Heart right ventricle (tissue), 16 donors: ENCODE measurements at regions of chr2 and their contacts with region 1.

Region 1: DNA sequence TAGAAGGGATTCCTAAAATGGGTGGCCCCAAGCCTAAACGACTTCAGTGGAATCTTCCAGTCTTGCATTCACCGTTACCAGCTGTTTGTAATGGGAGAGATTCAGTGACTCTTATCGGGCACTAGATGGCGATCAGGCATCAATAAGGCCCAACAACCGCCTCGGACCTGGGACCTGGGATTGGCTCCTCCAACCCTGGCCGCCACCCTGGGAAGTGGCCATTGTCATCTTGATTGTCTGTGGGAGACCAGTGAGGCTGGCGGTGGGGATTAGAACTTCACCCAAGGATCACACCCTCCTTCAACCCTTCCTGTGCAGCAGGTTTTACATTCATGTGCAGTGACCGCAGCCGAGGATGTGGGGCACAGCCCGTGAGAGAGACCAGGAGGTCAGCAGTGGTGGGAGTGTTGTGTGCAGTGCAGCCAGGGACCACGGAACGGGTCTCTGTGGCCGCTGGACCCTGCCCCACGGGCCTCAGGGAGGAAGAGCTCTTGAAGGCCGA is 85.3 kb downstream of the SPP2 start:
- DNase-seq: peak; percentile 25 to 29
- ATAC-seq: peak; percentile 42 to 81 (median 66)
- H3K4me3 ChIP-seq: no peak overlapping the region
- H3K27ac ChIP-seq: no peak overlapping the region
- H3K4me1 ChIP-seq: peaks cover 0 to 18% (median 0%) of the 10 kb centered on the region in 9 donors
- H3K27me3 ChIP-seq: peaks cover 0 to 38% (median 24%) of the 10 kb centered on the region in 7 donors
- CTCF ChIP-seq: peak; percentile 54 to 86 (median 80)

Region 2: DNA sequence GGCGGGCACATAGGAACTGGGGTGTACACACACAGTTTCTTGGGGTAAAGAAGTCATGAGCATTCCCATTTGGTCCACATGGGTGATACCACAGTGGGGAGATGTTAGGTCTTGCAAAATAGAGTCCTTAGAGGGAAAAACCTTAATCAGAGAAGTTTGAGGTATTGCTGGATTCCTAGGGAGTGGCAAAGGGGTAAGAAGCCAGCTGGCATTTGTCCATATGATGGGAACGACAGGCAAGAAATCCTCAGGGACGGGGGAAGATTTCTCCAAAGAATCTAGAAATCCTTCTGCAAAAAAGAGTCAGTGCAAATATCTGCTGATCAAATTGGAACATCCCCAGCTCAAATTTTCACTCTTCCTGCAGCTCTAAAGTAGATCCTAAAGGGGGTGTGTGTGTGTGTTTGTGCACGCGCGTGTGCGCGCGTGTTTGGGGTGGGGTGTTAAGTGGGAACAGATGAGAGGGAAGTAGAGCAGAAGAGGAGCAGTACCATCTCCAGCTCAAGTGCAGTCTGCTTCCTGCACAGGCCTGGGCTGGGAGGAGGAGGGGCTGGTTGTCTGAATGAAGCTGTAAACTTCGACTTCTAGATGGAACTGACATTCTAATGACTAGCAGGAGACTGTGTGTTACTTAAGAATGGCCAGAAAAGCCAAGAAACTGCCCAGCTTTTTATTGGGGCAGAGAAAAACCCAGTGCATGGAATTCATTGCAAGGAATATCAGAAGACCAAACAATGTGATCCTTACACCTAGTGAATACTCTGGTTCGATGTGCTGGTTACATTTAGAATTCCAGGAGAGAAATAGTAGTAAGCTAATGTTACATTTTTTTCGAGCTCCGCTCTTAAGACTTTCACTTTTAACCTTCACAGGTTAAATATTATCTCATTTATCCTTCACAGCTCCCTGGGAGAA is 82.8 kb after region 1 on chr2:
- intact Hi-C with region 1: no loop called
- DNase-seq: no peak
- ATAC-seq: no peak
- H3K4me3 ChIP-seq: no peak overlapping the region
- H3K27ac ChIP-seq: no peak overlapping the region
- H3K4me1 ChIP-seq: no peaks in the 10 kb centered on the region
- H3K27me3 ChIP-seq: peaks cover 0 to 18% (median 13%) of the 10 kb centered on the region in 7 donors
- CTCF ChIP-seq: no peak

Region 3: GRCh38 chr2:234288974-234289455 is 153.2 kb after region 1 on chr2:
- intact Hi-C with region 1: loop called in 3 of 10 experiments (anchors 5 to 10 kb)
- DNase-seq: peak; percentile 49 to 71
- ATAC-seq: peak in 5 of 8 donors; percentile 32 to 64 (median 43)
- H3K4me3 ChIP-seq: no peak overlapping the region
- H3K27ac ChIP-seq: peak overlapping the region in 1 of 10 donors; percentile 90
- H3K4me1 ChIP-seq: peaks cover 0 to 64% (median 13%) of the 10 kb centered on the region in 9 donors
- H3K27me3 ChIP-seq: peaks cover 0 to 3% (median 0%) of the 10 kb centered on the region in 7 donors
- CTCF ChIP-seq: peak; percentile 48 to 86 (median 72)

Region 4: DNA sequence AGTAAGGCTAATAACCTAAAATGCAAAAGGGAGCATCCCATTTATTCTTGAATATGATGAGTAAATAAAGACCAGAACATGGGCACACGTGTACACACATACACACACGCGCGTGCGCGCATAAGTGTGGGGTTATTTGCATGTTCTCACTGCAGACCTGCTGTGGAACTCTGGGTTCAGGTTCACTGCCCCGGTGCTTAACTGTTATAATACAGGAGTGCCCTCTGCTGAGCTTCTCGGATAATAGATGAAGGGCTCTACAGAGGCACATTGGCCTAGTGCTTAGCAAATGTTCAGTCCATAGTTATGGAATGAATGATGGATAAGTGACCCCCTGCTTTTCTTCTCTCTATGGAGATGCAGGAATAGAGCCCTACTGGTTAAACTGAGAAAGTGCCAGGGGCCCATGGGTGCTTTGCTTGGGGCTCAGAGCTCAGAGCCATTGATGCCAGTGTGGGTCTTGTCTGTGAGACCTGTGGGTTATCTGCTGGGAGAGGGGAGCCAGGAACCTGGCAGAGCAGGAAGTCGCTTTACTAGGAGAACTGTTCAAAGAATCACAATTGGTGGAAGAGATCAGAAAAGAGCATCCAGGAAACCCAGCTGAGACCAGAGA is 364.7 kb after region 1 on chr2:
- intact Hi-C with region 1: loop called (anchors 1 to 5 kb)
- DNase-seq: peak; percentile 27 to 48
- ATAC-seq: peak in 6 of 8 donors; percentile 23 to 69 (median 54)
- H3K4me3 ChIP-seq: no peak overlapping the region
- H3K27ac ChIP-seq: no peak overlapping the region
- H3K4me1 ChIP-seq: peaks cover 2 to 21% (median 9%) of the 10 kb centered on the region in 9 donors
- H3K27me3 ChIP-seq: peaks cover 0 to 19% (median 5%) of the 10 kb centered on the region in 7 donors
- CTCF ChIP-seq: peak; percentile 31 to 78 (median 64)

Region 5: DNA sequence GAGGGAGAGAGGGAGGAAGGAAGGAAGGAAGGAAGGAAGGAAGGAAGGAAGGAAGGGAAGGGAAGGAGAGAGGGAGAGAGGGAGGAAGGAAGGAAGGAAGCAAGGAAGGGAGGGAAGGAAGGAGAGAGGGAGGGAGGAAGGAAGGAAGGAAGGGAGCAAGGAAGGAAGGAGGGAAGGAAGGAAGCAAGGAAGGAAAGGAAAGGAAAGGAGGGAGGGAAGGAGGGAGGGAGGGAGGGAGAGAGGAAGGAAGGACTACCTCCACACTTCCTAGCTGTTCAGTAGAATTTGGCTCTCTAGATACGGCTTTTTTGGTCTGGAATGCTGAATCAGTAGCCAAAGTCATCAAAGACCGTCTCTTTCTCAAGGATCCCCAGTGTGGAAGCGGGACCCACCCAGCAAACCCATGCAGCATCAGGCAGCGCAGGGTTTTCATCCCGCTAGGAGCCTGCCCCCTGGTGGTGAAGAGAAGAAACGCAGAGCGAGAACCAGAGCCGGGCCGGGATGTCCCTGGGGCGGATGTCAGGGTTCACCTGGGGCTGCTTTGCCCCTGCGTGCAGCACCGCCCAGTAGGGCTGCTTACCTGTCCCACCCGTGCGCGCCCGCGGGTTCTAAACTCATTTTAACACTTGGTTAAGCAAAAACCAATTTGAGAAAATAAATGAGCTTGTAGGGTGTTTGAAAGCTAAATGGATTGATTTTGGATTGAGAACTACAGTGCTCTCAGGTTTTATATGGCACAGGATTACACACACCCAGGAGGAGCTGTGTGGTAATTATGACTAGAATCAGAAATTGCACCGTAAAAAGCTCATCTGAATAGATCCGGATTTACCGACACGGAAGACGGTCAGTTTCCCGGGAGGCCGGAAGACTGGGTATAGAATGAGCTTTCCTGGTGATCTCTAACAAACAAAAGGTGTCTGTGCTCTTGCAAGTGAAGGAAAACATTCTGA is 409.2 kb after region 1 on chr2:
- intact Hi-C with region 1: loop called in 6 of 10 experiments (anchors 5 to 10 kb)
- DNase-seq: peak; percentile 53 to 65
- ATAC-seq: peak in 7 of 8 donors; percentile 54 to 74 (median 64)
- H3K4me3 ChIP-seq: no peak overlapping the region
- H3K27ac ChIP-seq: no peak overlapping the region
- H3K4me1 ChIP-seq: peaks cover 0 to 7% (median 0%) of the 10 kb centered on the region in 9 donors
- H3K27me3 ChIP-seq: peaks cover 0 to 22% (median 5%) of the 10 kb centered on the region in 7 donors
- CTCF ChIP-seq: peak; percentile 82 to 97 (median 92)

Region 6: DNA sequence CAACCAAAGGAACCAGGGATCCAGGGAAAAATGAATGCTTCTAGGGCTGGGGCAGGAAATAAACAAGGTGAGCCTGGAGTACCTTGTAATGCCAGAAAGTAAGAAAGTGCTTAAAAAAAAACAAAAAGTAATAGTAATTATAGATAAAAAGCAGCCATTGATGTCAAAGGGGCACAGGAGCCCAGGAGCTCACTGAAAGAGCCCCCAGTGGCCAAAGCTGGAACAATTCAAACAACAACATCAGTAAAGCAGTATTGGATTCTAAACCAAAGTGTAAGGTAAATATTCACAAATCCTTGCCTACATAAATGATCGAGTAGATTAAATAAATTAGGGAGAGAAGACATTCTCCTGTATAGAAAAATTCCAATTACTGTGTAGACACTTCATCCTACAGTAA is 475.4 kb after region 1 on chr2:
- intact Hi-C with region 1: no loop called
- DNase-seq: no peak
- ATAC-seq: no peak
- H3K4me3 ChIP-seq: no peak overlapping the region
- H3K27ac ChIP-seq: no peak overlapping the region
- H3K4me1 ChIP-seq: no peaks in the 10 kb centered on the region
- H3K27me3 ChIP-seq: peaks cover 0 to 10% (median 5%) of the 10 kb centered on the region in 7 donors
- CTCF ChIP-seq: peak in 3 of 9 donors; percentile 8 to 32 (median 15)

Region 7: GRCh38 chr2:235116885-235117492 is 981.2 kb after region 1 on chr2:
- intact Hi-C with region 1: loop called in 7 of 10 experiments (anchors 5 to 10 kb)
- DNase-seq: no peak
- ATAC-seq: no peak
- H3K4me3 ChIP-seq: no peak overlapping the region
- H3K27ac ChIP-seq: no peak overlapping the region
- H3K4me1 ChIP-seq: no peaks in the 10 kb centered on the region
- H3K27me3 ChIP-seq: peaks cover 0 to 13% (median 7%) of the 10 kb centered on the region in 7 donors
- CTCF ChIP-seq: peak; percentile 53 to 82 (median 71)